Activated T-helper 1 cell treated with anti-CD3 and anti-CD28 coated beads, Interleukin-12 subunit alpha, Interleukin-12 subunit beta, Interleukin-2, Interleukin-4 antibody, amounts not matched to agents 30 ng/mL and 10 ng/mL and 1 ng/mL, durations not matched to agents 14 hours and 24 hours and 36 hours (primary cell): ENCODE measurements at regions of chr14 and their contacts with region 1.

Region 1: GRCh38 chr14:93970549-93970946 is 5.8 kb downstream of the ASB2 start:
- DNase-seq: no peak
- H3K4me3 Mint-ChIP-seq: peak overlapping the region; percentile 84
- H3K27ac Mint-ChIP-seq: peak overlapping the region; percentile 96
- H3K4me1 Mint-ChIP-seq: peaks cover 91% of the 10 kb centered on the region
- H3K27me3 Mint-ChIP-seq: no peaks in the 10 kb centered on the region

Region 2: GRCh38 chr14:93959239-93960107 is 11.1 kb before region 1 on chr14:
- intact Hi-C with region 1: loop called (anchors 1 kb)
- DNase-seq: peak; percentile 94
- H3K4me3 Mint-ChIP-seq: peak overlapping the region; percentile 84
- H3K27ac Mint-ChIP-seq: peak overlapping the region; percentile 100
- H3K4me1 Mint-ChIP-seq: peaks cover 97% of the 10 kb centered on the region
- H3K27me3 Mint-ChIP-seq: no peaks in the 10 kb centered on the region

Region 3: GRCh38 chr14:94001501-94002396 is 31.2 kb after region 1 on chr14:
- intact Hi-C with region 1: loop called (anchors 1 kb)
- DNase-seq: peak; percentile 56
- H3K4me3 Mint-ChIP-seq: peak overlapping the region; percentile 1
- H3K27ac Mint-ChIP-seq: peak overlapping the region; percentile 36
- H3K4me1 Mint-ChIP-seq: peaks cover 39% of the 10 kb centered on the region
- H3K27me3 Mint-ChIP-seq: peaks cover 2% of the 10 kb centered on the region